Pancreas (tissue), 10 donors: ENCODE measurements at regions of chr18 and their contacts with region 1.

Region 1: GRCh38 chr18:57561728-57562423 is 24.6 kb downstream of the FECH start:
- DNase-seq: no peak
- ATAC-seq: peak; percentile 46 to 78 (median 70)
- H3K4me3 ChIP-seq: no peak overlapping the region
- H3K27ac ChIP-seq: no peak overlapping the region
- H3K4me1 ChIP-seq: no peaks in the 10 kb centered on the region
- H3K27me3 ChIP-seq: no peaks in the 10 kb centered on the region
- CTCF ChIP-seq: peak; percentile 46 to 87 (median 68)

Region 2: DNA sequence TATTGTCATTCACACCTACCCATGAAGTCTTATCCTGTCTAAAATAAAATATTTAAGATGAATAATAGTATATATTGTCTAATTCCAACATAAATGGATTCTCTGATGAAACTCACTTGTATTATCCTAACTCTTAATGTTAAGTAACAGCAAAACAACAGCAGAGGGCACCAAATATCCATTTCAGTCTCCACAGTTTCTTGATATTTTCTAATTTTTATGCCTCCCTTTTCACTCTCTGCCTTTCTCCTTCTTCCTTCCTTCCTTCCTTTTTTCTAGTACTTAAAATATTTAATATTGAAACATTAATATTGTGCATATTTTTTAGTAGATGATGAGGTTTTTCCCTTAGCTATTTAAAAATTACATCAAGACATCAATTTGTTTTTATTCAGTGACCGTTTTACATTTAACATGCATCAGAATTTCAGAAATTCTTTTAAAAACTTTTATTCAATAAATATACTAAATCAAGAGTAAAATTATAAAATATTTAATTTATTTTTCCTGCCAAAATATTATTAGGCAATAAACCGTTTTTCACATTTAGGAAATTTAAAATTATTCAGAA is 813.1 kb before region 1 on chr18:
- intact Hi-C with region 1: loop called in 1 of 3 experiments (anchors 10 kb)
- DNase-seq: no peak
- ATAC-seq: peak in 3 of 4 donors; percentile 50 to 57 (median 55)
- H3K4me3 ChIP-seq: no peak overlapping the region
- H3K27ac ChIP-seq: no peak overlapping the region
- H3K4me1 ChIP-seq: no peaks in the 10 kb centered on the region
- H3K27me3 ChIP-seq: no peaks in the 10 kb centered on the region
- CTCF ChIP-seq: peak in 3 of 4 donors; percentile 20 to 37 (median 33)

Region 3: GRCh38 chr18:57621246-57621604 is 59.3 kb after region 1 on chr18:
- intact Hi-C with region 1: no loop called
- DNase-seq: no peak
- ATAC-seq: peak; percentile 18 to 61 (median 48)
- H3K4me3 ChIP-seq: peak overlapping the region; percentile 54 to 84 (median 62)
- H3K27ac ChIP-seq: peak overlapping the region; percentile 77 to 92 (median 82)
- H3K4me1 ChIP-seq: peaks cover 0 to 11% (median 8%) of the 10 kb centered on the region in 3 donors
- H3K27me3 ChIP-seq: no peaks in the 10 kb centered on the region
- CTCF ChIP-seq: no peak